Thyroid gland (tissue), 4 donors: ENCODE measurements at regions of chr9 and their contacts with region 1.

Region 1: DNA sequence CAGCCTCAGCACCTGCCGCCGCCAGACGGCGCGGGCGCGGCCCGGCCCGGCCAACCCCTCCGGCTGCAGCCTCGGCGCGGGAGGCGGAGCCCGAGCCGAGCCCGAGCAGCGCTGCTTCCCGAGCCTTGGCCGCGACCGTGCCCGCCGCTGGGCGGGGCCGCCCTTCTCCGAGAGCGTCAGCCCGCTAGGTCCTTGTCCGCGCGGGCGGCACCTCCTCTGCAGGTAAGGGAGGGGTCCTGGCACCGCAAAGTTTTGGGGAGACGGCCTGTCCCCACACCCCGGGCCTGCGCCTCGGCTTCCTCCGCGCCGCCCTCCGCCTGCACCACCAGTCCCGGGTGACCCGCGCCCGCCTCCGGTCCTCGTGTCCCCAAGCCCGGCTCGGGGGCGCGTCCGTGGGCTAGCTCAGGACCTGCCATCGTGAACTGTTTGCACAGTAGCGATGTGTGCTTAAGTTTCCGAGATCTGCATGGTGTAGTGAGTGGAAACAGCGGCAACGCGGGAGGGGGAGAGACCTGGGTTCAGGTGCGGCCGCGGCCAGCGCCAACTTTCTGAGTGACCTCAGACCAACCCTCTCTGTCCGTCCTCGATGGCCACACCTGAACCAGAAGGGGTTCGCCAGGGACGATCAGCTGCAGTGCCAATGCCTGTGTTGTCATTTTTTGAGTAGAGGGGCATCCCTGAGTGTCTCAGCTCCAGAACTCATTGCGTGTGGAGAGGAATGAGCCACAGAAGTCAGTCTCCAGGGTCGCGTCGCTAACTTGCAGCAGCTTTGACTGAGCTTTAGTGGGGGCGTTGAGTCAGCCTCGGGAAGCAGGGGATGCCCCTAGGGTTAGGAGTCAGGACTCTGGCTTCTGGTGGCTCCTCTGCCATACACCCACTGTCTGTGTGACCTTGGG is at the start of gene FRMPD1:
- DNase-seq: peak; percentile 68 to 71
- H3K4me3 ChIP-seq: peak within 1 kb of the TSS; percentile 31 to 54 (median 37)
- H3K27ac ChIP-seq: no peak within 1 kb of the TSS
- H3K4me1 ChIP-seq: peaks cover 5 to 8% of the 10 kb centered on the region in 2 donors
- H3K27me3 ChIP-seq: no peaks in the 10 kb centered on the region
- CTCF ChIP-seq: peak in 2 of 6 experiments; percentile 19 to 34
- POLR2A ChIP-seq: no peak
- total RNA-seq, gene FRMPD1: 0.13 to 0.49 (median 0.22) TPM in 3 of 4 donors, not detected in the other

Region 2: DNA sequence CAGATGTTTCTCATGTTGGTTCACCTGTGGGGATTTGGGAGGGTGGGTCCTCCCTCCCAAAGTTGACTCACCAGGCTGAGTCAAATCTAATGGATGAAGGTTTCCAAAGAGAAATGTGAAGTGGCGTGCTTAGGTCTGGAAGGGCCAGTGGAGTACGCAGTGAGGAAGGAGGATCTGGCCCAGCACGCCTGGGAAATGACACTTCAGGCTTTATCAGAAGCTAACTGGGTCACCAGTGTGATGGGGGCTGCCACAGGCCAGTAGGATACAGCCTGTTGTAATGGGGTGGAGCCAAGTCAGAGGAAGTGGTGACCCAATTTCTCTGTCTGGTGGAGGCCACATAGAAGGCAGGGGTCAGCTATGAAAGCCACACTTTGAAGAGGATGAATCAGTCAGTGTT is 147.4 kb before region 1 on chr9:
- intact Hi-C with region 1: loop called (anchors 10 kb)
- DNase-seq: no peak
- H3K4me3 ChIP-seq: no peak overlapping the region
- H3K27ac ChIP-seq: no peak overlapping the region
- H3K4me1 ChIP-seq: no peaks in the 10 kb centered on the region
- H3K27me3 ChIP-seq: no peaks in the 10 kb centered on the region
- CTCF ChIP-seq: no peak
- POLR2A ChIP-seq: no peak

Region 3: DNA sequence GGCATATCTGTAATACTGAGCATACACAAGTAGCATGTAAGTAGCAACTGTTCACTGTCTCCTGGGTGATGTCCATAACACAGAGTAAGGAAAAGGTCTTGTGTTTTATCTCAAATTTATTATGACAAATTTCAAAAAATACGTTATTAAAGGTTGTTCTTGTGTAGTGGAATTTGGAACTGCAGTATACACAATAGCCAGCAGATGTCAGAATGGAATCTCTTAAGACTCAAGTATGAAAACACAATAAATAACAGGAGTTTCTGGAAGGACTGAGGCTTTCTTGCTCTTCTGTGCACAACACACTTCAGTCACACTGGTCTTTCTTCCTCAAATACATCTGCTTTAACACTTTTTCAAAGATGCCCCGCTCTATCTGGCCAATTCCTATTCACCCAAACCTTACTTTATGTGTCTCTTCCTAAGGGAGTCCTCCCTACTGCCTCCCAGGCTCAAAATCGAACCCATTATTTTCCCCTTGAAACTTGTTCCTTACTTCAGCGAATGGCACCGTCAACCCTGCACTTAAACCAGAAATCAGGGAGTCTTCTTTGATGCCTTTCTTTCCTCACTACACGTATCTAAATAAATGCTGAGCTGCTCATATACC is 68.5 kb before region 1 on chr9:
- intact Hi-C with region 1: loop called (anchors 10 kb)
- DNase-seq: no peak
- H3K4me3 ChIP-seq: no peak overlapping the region
- H3K27ac ChIP-seq: peak overlapping the region in 1 of 3 donors; percentile 41
- H3K4me1 ChIP-seq: peaks cover 6 to 24% of the 10 kb centered on the region in 2 donors
- H3K27me3 ChIP-seq: no peaks in the 10 kb centered on the region
- CTCF ChIP-seq: peak; percentile 37 to 76 (median 67)
- POLR2A ChIP-seq: no peak